ENCODE measurements at regions of chr20 and their contacts with region 1.

Region 1: DNA sequence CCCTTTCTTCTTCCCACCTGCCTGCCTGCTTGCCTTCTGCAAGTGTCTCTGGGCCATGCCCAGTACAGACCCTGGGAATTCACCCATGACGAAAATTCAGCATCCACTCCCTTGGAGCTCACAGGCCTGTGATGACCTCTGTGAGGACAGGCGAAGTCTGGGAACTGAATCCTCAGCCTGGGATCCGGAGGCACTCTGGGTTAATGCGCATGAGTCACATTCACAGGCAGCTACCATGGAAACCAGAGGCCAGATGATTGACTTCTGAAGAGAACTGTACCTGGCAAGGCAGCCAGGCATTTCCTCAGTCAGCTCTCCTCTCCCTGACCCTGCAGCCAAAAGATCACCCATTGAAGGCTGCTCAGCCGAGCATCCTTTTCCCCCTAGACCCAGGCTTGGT is 41.0 kb downstream of the SLC9A8 start:
- DNase-seq: peak; percentile 86
- ATAC-seq: peak; percentile 82
- H3K4me3 ChIP-seq: no peak overlapping the region
- H3K27ac ChIP-seq: no peak overlapping the region
- H3K4me1 ChIP-seq: peaks cover 8% of the 10 kb centered on the region
- H3K27me3 ChIP-seq: no peaks in the 10 kb centered on the region
- CTCF ChIP-seq: no peak
- POLR2A ChIP-seq: no peak
- RAD21 ChIP-seq: no peak

Region 2: DNA sequence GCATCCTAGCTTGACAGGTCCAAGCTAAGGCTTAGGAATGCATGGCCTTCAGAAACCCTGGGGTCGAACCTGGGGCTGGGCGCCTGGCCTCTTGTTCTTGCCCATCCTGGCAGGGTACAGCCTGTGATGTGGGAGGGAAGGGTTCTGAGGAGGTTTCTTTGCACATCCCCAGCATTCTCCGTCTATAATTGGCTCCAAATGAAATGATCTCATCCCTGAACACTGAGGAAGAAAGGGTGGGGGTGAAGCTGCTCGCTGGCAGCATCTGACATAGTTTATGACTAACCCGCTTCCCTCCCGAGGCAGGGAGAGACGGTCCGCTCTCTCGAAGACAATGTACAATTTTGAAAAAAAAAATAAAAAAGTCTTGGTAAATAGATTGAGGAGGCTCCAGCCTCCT is 508.7 kb before region 1 on chr20:
- CTCF ChIA-PET with region 1: no interaction called
- POLR2A ChIA-PET with region 1: no interaction called
- dilution Hi-C with region 1: no loop called
- in situ Hi-C with region 1: loop called (anchors 25 kb)
- intact Hi-C with region 1: no loop called
- DNase-seq: peak; percentile 92
- ATAC-seq: peak; percentile 98
- H3K4me3 ChIP-seq: no peak overlapping the region
- H3K27ac ChIP-seq: 0 out of 2 replicates have a peak overlapping the region, but pooled peaks have one; percentile 30
- H3K4me1 ChIP-seq: peaks cover 9% of the 10 kb centered on the region; the same call in 1 of the 2 replicates
- H3K27me3 ChIP-seq: peaks cover 8% of the 10 kb centered on the region
- CTCF ChIP-seq: no peak
- POLR2A ChIP-seq: no peak
- RAD21 ChIP-seq: no peak

Region 3: GRCh38 chr20:49877386-49877921 is 23.8 kb after region 1 on chr20:
- CTCF ChIA-PET with region 1: no interaction called
- POLR2A ChIA-PET with region 1: no interaction called
- dilution Hi-C with region 1: no loop called
- in situ Hi-C with region 1: no loop called
- intact Hi-C with region 1: no loop called
- DNase-seq: no peak
- ATAC-seq: peak; percentile 43
- H3K4me3 ChIP-seq: no peak overlapping the region
- H3K27ac ChIP-seq: no peak overlapping the region
- H3K4me1 ChIP-seq: peaks cover 7% of the 10 kb centered on the region
- H3K27me3 ChIP-seq: no peaks in the 10 kb centered on the region
- CTCF ChIP-seq: no peak
- POLR2A ChIP-seq: no peak
- RAD21 ChIP-seq: no peak

Region 4: GRCh38 chr20:49893242-49894072 is 39.8 kb after region 1 on chr20:
- CTCF ChIA-PET with region 1: no interaction called
- POLR2A ChIA-PET with region 1: interaction called, 12 read pairs
- dilution Hi-C with region 1: no loop called
- in situ Hi-C with region 1: no loop called
- intact Hi-C with region 1: no loop called
- DNase-seq: peak; percentile 14
- ATAC-seq: peak; percentile 34; the same call in 1 of the 2 replicates
- H3K4me3 ChIP-seq: no peak overlapping the region
- H3K27ac ChIP-seq: no peak overlapping the region
- H3K4me1 ChIP-seq: peaks cover 21% of the 10 kb centered on the region
- H3K27me3 ChIP-seq: no peaks in the 10 kb centered on the region
- CTCF ChIP-seq: no peak
- POLR2A ChIP-seq: no peak
- RAD21 ChIP-seq: no peak

Region 5: GRCh38 chr20:49936153-49937027 is 82.8 kb after region 1 on chr20 and contains the start of gene RNF114:
- CTCF ChIA-PET with region 1: no interaction called
- POLR2A ChIA-PET with region 1: no interaction called
- dilution Hi-C with region 1: no loop called
- in situ Hi-C with region 1: no loop called
- intact Hi-C with region 1: no loop called
- DNase-seq: peak; percentile 86
- ATAC-seq: peak; percentile 97
- H3K4me3 ChIP-seq: peak within 1 kb of the TSS; percentile 93
- H3K27ac ChIP-seq: peak within 1 kb of the TSS; percentile 87
- H3K4me1 ChIP-seq: peaks cover 13% of the 10 kb centered on the region
- H3K27me3 ChIP-seq: no peaks in the 10 kb centered on the region
- CTCF ChIP-seq: 0 out of 2 replicates have a peak, but pooled peaks have one; percentile 6
- POLR2A ChIP-seq: peak; percentile 86
- RAD21 ChIP-seq: no peak
- total RNA-seq, gene RNF114: 44.6 and 49.7 TPM in 2 replicates